A549 (cell line): ENCODE measurements at regions of chr4 and their contacts with region 1.

Region 1: GRCh38 chr4:82268050-82268825 is 105.6 kb downstream of the HNRNPD start:
- DNase-seq: peak; percentile 40 to 55
- ATAC-seq: peak; percentile 99 to 100
- H3K4me3 ChIP-seq: no peak overlapping the region
- H3K27ac ChIP-seq: no peak overlapping the region
- H3K4me1 ChIP-seq: no peaks in the 10 kb centered on the region
- CTCF ChIP-seq: peak; percentile 68
- EP300 ChIP-seq: no peak
- POLR2A ChIP-seq: no peak
- RAD21 ChIP-seq: peak; percentile 62 to 72

Region 2: GRCh38 chr4:81405894-81406401 is 862.3 kb before region 1 on chr4:
- CTCF ChIA-PET with region 1: interaction called, 11 read pairs
- POLR2A ChIA-PET with region 1: no interaction called
- DNase-seq: peak; percentile 29 to 68
- ATAC-seq: peak; percentile 83 to 85; a peak in 5 of 6 replicates
- H3K4me3 ChIP-seq: no peak overlapping the region
- H3K27ac ChIP-seq: no peak overlapping the region
- H3K4me1 ChIP-seq: no peaks in the 10 kb centered on the region
- CTCF ChIP-seq: peak; percentile 93
- EP300 ChIP-seq: no peak
- POLR2A ChIP-seq: no peak
- RAD21 ChIP-seq: peak; percentile 58 to 78

Region 3: GRCh38 chr4:81466841-81467671 is 801.2 kb before region 1 on chr4:
- CTCF ChIA-PET with region 1: interaction called, 25 read pairs
- POLR2A ChIA-PET with region 1: no interaction called
- DNase-seq: peak in 1 of 2 experiments; percentile 53
- ATAC-seq: no peak
- H3K4me3 ChIP-seq: no peak overlapping the region
- H3K27ac ChIP-seq: no peak overlapping the region
- H3K4me1 ChIP-seq: 0 out of 3 replicates have a peak, but pooled peaks cover 5% of the 10 kb centered on the region
- CTCF ChIP-seq: peak; percentile 70
- EP300 ChIP-seq: no peak
- POLR2A ChIP-seq: no peak
- RAD21 ChIP-seq: peak; percentile 74 to 81

Region 4: GRCh38 chr4:82256718-82257117 is 11.5 kb before region 1 on chr4:
- CTCF ChIA-PET with region 1: interaction called, 11 read pairs
- POLR2A ChIA-PET with region 1: no interaction called
- DNase-seq: no peak
- ATAC-seq: no peak
- H3K4me3 ChIP-seq: no peak overlapping the region
- H3K27ac ChIP-seq: no peak overlapping the region
- H3K4me1 ChIP-seq: no peaks in the 10 kb centered on the region
- CTCF ChIP-seq: no peak
- EP300 ChIP-seq: no peak
- POLR2A ChIP-seq: no peak
- RAD21 ChIP-seq: no peak

Region 5: GRCh38 chr4:82284858-82285805 is 16.9 kb after region 1 on chr4:
- CTCF ChIA-PET with region 1: interaction called, 20 read pairs
- POLR2A ChIA-PET with region 1: no interaction called
- DNase-seq: peak; percentile 85 to 98
- ATAC-seq: peak; percentile 98 to 100
- H3K4me3 ChIP-seq: peak overlapping the region; percentile 43
- H3K27ac ChIP-seq: peak overlapping the region in 1 of 2 experiments; percentile 20; a peak in 2 of 6 replicates
- H3K4me1 ChIP-seq: 0 out of 3 replicates have a peak, but pooled peaks cover 4% of the 10 kb centered on the region
- CTCF ChIP-seq: peak; percentile 68
- EP300 ChIP-seq: no peak
- POLR2A ChIP-seq: no peak
- RAD21 ChIP-seq: peak in 1 of 2 experiments; percentile 36; a peak in 3 of 5 replicates

Region 6: GRCh38 chr4:82335043-82335442 is 66.8 kb after region 1 on chr4:
- CTCF ChIA-PET with region 1: no interaction called
- POLR2A ChIA-PET with region 1: no interaction called
- DNase-seq: no peak
- ATAC-seq: no peak
- H3K4me3 ChIP-seq: no peak overlapping the region
- H3K27ac ChIP-seq: no peak overlapping the region
- H3K4me1 ChIP-seq: no peaks in the 10 kb centered on the region
- CTCF ChIP-seq: no peak
- EP300 ChIP-seq: no peak
- POLR2A ChIP-seq: no peak
- RAD21 ChIP-seq: no peak